ENCODE measurements at regions of chr9 and their contacts with region 1.

Region 1: GRCh38 chr9:36798350-36799065 is 225.8 kb downstream of the MELK start:
- DNase-seq: no peak
- H3K4me3 ChIP-seq: no peak overlapping the region
- H3K27ac ChIP-seq: no peak overlapping the region
- H3K4me1 ChIP-seq: no peaks in the 10 kb centered on the region
- H3K27me3 ChIP-seq: no peaks in the 10 kb centered on the region
- CTCF ChIP-seq: no peak
- EP300 ChIP-seq: no peak
- POLR2A ChIP-seq: no peak

Region 2: DNA sequence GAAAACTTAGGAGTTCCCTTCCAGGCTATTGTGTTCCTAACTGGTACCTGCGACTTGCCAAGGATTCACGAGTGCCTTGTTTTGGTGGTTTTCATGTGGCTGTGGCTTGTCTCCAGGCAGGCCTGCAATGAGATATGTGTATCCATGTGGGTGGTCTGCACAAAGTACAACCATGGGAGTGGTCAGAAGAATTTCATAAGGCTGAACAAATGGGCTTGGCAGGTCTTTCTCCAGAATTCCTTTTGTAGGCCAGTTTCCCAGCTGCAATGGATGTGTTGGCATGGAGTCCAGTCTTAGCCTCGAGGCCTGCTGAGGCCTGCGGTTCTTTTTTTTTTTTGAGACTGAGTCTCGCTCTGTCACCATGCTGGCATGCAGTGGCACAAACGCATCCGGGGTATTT is 254.6 kb before region 1 on chr9:
- intact Hi-C with region 1: no loop called
- DNase-seq: peak in 1 of 5 donors; percentile 8
- H3K4me3 ChIP-seq: no peak overlapping the region
- H3K27ac ChIP-seq: no peak overlapping the region
- H3K4me1 ChIP-seq: peaks cover 1% of the 10 kb centered on the region
- H3K27me3 ChIP-seq: no peaks in the 10 kb centered on the region
- CTCF ChIP-seq: no peak
- EP300 ChIP-seq: no peak
- POLR2A ChIP-seq: no peak

Region 3: DNA sequence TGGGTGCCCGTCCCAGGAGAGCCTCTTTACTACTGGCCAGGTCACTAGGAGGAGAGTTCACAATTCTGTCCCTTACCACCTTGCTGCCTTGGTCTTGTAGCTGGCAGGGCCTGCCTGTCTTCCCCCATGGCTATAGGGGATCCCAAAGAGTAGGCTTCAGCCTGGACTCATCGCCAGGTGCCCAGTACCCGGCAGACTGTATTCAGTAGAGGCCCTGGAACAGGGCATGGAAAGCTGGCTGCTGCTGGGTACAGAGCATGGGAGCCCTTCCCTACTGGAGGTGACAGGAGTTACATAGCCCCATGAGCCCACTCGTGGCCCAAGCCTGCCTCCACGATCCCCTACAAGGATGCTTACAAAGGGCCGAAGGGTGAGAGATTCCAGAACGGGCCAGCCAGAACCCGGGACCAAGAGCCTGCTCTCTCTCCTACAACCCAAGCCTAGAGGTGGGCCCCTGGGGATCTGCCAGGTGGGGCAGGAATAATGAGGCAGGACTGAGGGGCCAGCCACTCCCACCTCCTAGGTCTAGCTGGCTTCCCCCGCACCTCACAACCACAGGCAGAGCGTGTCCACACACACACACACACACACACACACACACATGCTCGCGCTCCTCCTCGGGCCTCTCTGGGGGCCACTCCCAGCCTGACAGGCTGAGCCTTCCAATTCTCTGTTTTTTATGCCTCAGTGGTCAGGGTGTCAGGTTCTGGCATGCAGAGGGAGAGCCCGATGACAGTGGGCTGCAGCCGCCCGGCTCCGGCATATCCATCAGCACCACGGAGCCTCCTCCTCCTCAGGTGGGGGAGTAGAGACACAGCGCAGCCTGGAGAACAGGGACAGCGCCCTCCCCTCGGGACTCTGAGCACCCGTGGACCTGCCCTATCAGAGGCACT is 49.5 kb after region 1 on chr9:
- intact Hi-C with region 1: loop called in 1 of 4 experiments (anchors 10 kb)
- DNase-seq: no peak
- H3K4me3 ChIP-seq: no peak overlapping the region
- H3K27ac ChIP-seq: no peak overlapping the region
- H3K4me1 ChIP-seq: no peaks in the 10 kb centered on the region
- H3K27me3 ChIP-seq: no peaks in the 10 kb centered on the region
- CTCF ChIP-seq: no peak
- EP300 ChIP-seq: no peak
- POLR2A ChIP-seq: no peak

Region 4: DNA sequence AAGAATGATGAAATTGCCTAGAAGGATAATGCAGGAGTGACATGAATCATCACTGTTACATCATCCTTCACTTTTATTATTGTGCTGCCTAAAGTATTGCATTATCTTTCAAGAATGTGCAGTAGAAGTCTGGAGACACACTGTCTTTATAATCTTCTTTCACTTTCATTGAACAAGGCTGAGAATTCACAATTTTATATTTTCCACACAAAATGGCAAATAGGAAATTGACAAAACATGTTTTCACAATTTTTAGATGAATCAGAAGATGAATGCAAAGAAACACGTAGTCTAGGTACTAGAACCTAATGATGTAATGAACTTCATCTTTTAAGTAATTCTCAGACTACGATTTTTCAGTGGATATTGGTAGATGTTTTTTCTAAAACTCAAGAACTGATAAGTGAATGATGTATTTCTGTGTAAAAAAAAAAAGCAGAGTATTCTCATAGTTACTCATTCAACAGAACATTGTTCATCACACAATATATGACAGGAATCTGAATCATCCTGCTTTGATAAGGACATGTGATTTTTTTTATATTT is 492.5 kb after region 1 on chr9:
- intact Hi-C with region 1: no loop called
- DNase-seq: no peak
- H3K4me3 ChIP-seq: no peak overlapping the region
- H3K27ac ChIP-seq: no peak overlapping the region
- H3K4me1 ChIP-seq: no peaks in the 10 kb centered on the region
- H3K27me3 ChIP-seq: no peaks in the 10 kb centered on the region
- CTCF ChIP-seq: no peak
- EP300 ChIP-seq: no peak
- POLR2A ChIP-seq: no peak

Measured in ovary (tissue), 10 donors.